Ascending aorta (tissue), 2 donors: ENCODE measurements at regions of chr6 and their contacts with region 1.

Region 1: DNA sequence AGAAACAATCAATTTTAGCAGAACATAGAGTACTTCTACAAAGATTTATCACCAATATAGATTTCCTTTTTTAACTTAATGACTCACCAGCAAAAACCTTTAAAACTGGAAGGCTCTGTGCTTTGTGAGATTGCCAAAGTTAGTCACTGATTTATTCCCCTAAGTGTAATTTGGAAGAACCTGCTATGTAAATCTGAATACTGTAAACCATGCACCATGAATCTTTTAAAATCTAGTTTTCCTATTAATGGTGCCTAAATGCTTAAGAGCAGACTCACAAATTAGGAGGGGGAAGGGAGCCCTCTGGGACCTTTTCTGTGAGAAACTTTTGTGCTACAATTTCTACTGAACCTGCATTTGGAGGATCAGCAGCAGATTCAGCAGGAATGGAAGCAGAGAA is 57.8 kb upstream of the PNRC1 start:
- DNase-seq: peak in 1 of 2 donors; percentile 62
- H3K4me3 ChIP-seq: no peak overlapping the region
- H3K27ac ChIP-seq: peak overlapping the region; percentile 75 to 81
- H3K4me1 ChIP-seq: peaks cover 7 to 33% of the 10 kb centered on the region in 2 donors
- H3K27me3 ChIP-seq: no peaks in the 10 kb centered on the region
- CTCF ChIP-seq: no peak

Region 2: GRCh38 chr6:88989215-88989614 is 33.6 kb before region 1 on chr6:
- intact Hi-C with region 1: loop called (anchors 5 kb)
- DNase-seq: no peak
- H3K4me3 ChIP-seq: no peak overlapping the region
- H3K27ac ChIP-seq: no peak overlapping the region
- H3K4me1 ChIP-seq: no peaks in the 10 kb centered on the region
- H3K27me3 ChIP-seq: no peaks in the 10 kb centered on the region
- CTCF ChIP-seq: no peak

Region 3: DNA sequence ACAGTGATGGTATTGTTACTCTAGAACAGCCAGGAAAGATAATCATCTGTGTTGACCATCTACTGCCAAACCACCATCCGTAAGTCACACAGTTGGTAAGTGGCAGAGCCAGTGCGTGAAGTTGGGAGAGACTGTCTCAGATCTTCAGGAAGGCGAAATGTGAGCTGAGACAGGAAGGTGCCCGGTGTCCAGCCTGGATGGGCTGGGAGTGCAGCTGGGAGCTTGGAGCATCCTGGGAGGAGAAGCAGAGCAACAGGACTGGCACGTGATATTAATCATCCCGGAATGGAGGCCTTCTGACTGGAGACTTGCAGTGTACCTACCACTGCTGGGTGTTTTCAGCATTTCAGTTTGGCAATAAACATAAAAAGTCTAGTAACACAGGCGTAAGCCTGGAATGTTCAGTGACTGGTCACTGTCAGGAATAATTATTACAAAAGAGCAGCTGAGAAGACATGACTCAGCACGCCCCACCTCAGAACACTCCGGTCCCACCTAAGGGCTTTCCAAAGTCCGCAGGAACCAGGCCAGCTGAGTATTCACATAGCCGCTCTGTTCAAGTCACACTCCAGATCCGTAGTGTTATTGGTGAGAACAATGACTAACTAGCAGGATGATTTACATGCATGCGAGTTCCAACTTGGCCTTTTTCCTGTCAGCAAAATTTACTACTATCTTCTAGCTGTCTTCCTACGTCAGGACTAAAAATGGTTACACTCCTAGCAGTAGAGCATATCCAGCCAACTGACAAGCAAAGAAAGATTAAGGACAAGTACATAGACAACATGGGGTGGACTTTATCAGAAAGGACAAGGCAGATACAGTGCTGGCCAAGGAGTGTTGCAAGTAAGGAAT is 12.7 kb after region 1 on chr6:
- intact Hi-C with region 1: loop called (anchors 1 kb)
- DNase-seq: peak; percentile 78 to 95
- H3K4me3 ChIP-seq: peak overlapping the region; percentile 1 to 15
- H3K27ac ChIP-seq: peak overlapping the region; percentile 86 to 87
- H3K4me1 ChIP-seq: peaks cover 4 to 17% of the 10 kb centered on the region in 2 donors
- H3K27me3 ChIP-seq: no peaks in the 10 kb centered on the region
- CTCF ChIP-seq: no peak

Region 4: GRCh38 chr6:89180971-89181370 is 158.2 kb after region 1 on chr6:
- intact Hi-C with region 1: no loop called
- DNase-seq: no peak
- H3K4me3 ChIP-seq: no peak overlapping the region
- H3K27ac ChIP-seq: no peak overlapping the region
- H3K4me1 ChIP-seq: no peaks in the 10 kb centered on the region
- H3K27me3 ChIP-seq: no peaks in the 10 kb centered on the region
- CTCF ChIP-seq: no peak

Region 5: GRCh38 chr6:89297695-89298351 is 275.0 kb after region 1 on chr6:
- intact Hi-C with region 1: no loop called
- DNase-seq: peak; percentile 38 to 85
- H3K4me3 ChIP-seq: peak overlapping the region in 1 of 2 donors; percentile 18
- H3K27ac ChIP-seq: peak overlapping the region; percentile 17 to 64
- H3K4me1 ChIP-seq: peaks cover 9 to 18% of the 10 kb centered on the region in 2 donors
- H3K27me3 ChIP-seq: no peaks in the 10 kb centered on the region
- CTCF ChIP-seq: no peak

Region 6: GRCh38 chr6:89487864-89488263 is 465.1 kb after region 1 on chr6:
- intact Hi-C with region 1: no loop called
- DNase-seq: no peak
- H3K4me3 ChIP-seq: no peak overlapping the region
- H3K27ac ChIP-seq: no peak overlapping the region
- H3K4me1 ChIP-seq: peaks cover 9 to 33% of the 10 kb centered on the region in 2 donors
- H3K27me3 ChIP-seq: no peaks in the 10 kb centered on the region
- CTCF ChIP-seq: no peak